Motor neuron (in vitro differentiated cells): ENCODE measurements at regions of chr1 and their contacts with region 1.

Region 1: DNA sequence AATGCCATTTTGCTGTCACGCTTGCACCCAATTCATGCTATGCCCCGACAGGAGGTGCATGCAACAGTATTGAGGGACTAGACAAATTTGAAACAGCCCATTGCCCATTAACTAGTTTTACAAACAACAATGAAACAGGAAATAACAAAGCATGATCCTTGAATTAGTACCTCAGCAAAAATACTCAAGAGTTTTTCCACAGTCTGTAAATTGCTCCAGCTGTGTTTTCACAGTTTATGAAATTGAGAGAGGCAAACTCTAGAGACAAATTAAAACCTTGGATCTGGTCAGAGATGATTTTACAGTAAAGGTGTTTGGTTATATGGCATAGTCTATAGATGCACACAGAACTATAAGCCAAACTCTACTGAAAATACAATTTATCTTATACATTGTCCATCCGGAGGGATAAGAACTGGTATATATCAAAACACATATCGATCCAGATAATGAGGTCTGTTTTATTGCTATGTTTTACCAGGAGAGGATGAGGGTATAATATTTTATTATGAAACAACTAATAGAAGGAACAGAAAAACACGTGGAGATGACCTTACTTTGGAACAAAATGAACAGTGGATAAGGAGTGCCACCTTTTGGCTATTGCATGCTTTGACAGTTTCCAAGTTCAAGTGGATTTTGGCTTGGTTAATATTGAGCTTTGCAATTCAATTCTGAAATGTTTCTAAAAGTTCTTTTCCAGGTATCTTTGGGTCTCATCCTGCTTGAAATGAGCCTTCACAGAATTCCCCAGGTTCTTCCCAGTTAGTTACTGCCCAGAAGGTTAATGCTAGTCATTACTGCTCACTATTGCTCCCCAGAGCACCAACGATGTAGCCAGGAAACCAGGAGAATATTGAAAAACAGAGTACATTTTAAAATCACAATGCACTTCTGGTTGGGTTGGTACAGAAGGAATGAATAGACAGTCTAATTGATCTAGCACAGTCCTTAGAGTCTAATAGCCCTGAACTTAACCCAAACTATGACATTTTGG is 45.7 kb downstream of the ZC3H11B start:
- ATAC-seq: peak in 6 of 8 experiments; percentile 36 to 76 (median 55)
- H3K4me3 ChIP-seq: no peak overlapping the region
- H3K27ac ChIP-seq: no peak overlapping the region
- H3K4me1 ChIP-seq: peaks cover 2 to 4% of the 10 kb centered on the region in 2 donors

Region 2: GRCh38 chr1:218351391-218352074 is 1215.7 kb before region 1 on chr1:
- in situ Hi-C with region 1: loop called in 8 of 9 experiments (anchors 25 kb)
- ATAC-seq: peak in 7 of 8 experiments; percentile 10 to 47 (median 24)
- H3K4me3 ChIP-seq: peak overlapping the region in 1 of 5 donors; percentile 1
- H3K27ac ChIP-seq: no peak overlapping the region
- H3K4me1 ChIP-seq: peaks cover 9 to 52% of the 10 kb centered on the region in 2 donors

Region 3: DNA sequence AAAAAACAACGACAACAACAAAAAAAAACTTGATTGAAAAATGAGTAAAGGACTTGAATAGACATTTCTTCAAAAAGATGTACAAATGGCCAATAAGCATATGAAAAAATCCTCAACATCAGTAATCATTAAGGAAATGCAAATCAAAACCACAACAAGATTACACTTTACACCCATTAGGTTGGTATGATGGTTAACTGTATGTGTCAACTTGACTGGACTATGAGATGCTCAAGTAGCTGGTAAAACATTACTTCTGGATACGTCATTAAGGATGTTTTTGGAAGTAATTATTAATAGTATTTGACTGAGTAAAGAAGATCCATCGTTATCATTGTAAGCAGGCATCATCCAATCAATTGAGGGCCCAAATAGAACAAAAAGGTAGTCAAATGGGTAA is 428.5 kb before region 1 on chr1:
- in situ Hi-C with region 1: no loop called
- ATAC-seq: no peak
- H3K4me3 ChIP-seq: no peak overlapping the region
- H3K27ac ChIP-seq: no peak overlapping the region
- H3K4me1 ChIP-seq: no peaks in the 10 kb centered on the region

Region 4: DNA sequence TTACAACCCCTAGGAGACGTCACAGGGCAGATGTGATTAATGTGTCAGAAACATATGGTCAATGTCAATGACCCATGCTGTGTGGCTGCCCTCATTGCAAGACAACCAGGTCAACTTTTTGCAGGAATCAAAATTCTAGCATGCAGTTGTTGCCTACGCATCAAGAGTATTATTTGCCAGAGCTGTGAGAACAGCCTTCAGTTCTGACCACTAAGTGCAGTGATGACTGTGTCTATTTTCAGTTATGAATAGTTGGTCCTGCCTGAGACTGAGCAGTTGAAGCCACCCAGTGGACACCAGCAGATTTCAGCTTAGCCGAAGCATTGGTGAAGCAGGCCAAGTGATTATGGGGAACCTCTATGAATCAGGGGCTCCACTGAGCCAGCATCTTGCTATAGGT is 346.3 kb before region 1 on chr1:
- in situ Hi-C with region 1: loop called in 2 of 9 experiments (anchors 25 kb)
- ATAC-seq: peak in 2 of 8 experiments; percentile 21 to 39
- H3K4me3 ChIP-seq: no peak overlapping the region
- H3K27ac ChIP-seq: no peak overlapping the region
- H3K4me1 ChIP-seq: no peaks in the 10 kb centered on the region